Activated CD4-positive, alpha-beta memory T cell treated with anti-CD3 and anti-CD28 coated beads for 36 hours (primary cell): ENCODE measurements at regions of chr3 and their contacts with region 1.

Region 1: GRCh38 chr3:132722164-132723024 is at the start of gene NPHP3:
- DNase-seq: peak; percentile 98
- H3K4me3 Mint-ChIP-seq: peak within 1 kb of the TSS; percentile 84
- H3K27ac Mint-ChIP-seq: peak within 1 kb of the TSS; percentile 77
- H3K4me1 Mint-ChIP-seq: peaks cover 39% of the 10 kb centered on the region
- H3K27me3 Mint-ChIP-seq: no peaks in the 10 kb centered on the region
- total RNA-seq, gene NPHP3: 13.6 to 16.7 TPM

Region 2: GRCh38 chr3:132416807-132417694 is 305.3 kb before region 1 on chr3 and contains the start of gene DNAJC13:
- CTCF ChIA-PET with region 1: interaction called, 3 read pairs
- POLR2A ChIA-PET with region 1: no interaction called
- intact Hi-C with region 1: loop called (anchors 1 kb)
- DNase-seq: peak; percentile 94
- H3K4me3 Mint-ChIP-seq: peak within 1 kb of the TSS; percentile 98
- H3K27ac Mint-ChIP-seq: peak within 1 kb of the TSS; percentile 90
- H3K4me1 Mint-ChIP-seq: peaks cover 31% of the 10 kb centered on the region
- H3K27me3 Mint-ChIP-seq: no peaks in the 10 kb centered on the region
- total RNA-seq, gene DNAJC13: 33.5 to 34.5 TPM

Region 3: GRCh38 chr3:133256787-133257483 is 534.5 kb after region 1 on chr3:
- CTCF ChIA-PET with region 1: no interaction called
- POLR2A ChIA-PET with region 1: no interaction called
- intact Hi-C with region 1: loop called (anchors 10 kb)
- DNase-seq: no peak
- H3K4me3 Mint-ChIP-seq: no peak overlapping the region
- H3K27ac Mint-ChIP-seq: no peak overlapping the region
- H3K4me1 Mint-ChIP-seq: peaks cover 5% of the 10 kb centered on the region
- H3K27me3 Mint-ChIP-seq: peaks cover 1% of the 10 kb centered on the region

Region 4: DNA sequence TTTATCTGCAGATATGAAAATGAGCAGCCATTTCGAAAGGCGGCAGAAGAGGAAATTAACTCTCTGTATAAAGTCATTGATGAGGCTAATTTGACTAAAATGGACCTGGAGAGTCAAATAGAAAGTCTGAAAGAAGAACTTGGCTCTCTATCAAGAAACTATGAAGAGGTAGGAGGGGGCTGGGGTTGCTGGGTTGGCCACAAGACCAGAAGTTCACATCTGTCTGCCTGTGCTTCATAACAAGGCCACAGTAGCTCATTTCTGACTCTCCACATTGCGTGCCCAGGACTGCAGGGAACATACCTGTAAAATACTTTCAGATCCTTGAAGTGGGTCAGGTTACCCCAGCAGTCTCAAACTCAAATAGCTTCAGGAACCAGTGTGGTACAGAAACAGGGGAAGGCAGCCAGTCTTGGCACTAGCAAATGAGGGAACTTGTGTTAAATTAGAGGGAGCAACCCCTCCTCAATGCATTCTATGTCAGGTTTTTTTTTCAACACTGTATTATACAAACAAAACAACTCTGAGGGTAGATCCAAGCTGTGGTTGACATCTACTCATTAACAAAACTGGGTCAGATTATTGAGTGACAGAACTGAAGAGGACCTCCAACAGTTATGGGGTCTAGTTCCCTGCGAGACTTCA is 726.2 kb after region 1 on chr3:
- CTCF ChIA-PET with region 1: interaction called, 3 read pairs
- POLR2A ChIA-PET with region 1: no interaction called
- intact Hi-C with region 1: loop called (anchors 2 kb)
- DNase-seq: peak; percentile 86
- H3K4me3 Mint-ChIP-seq: no peak overlapping the region
- H3K27ac Mint-ChIP-seq: peak overlapping the region; percentile 76
- H3K4me1 Mint-ChIP-seq: peaks cover 39% of the 10 kb centered on the region
- H3K27me3 Mint-ChIP-seq: no peaks in the 10 kb centered on the region

Region 5: GRCh38 chr3:133805527-133806475 is 1083.4 kb after region 1 on chr3 and contains the start of gene SRPRB:
- CTCF ChIA-PET with region 1: no interaction called
- POLR2A ChIA-PET with region 1: no interaction called
- intact Hi-C with region 1: loop called (anchors 1 kb)
- DNase-seq: peak; percentile 98
- H3K4me3 Mint-ChIP-seq: peak within 1 kb of the TSS; percentile 98
- H3K27ac Mint-ChIP-seq: peak within 1 kb of the TSS; percentile 94
- H3K4me1 Mint-ChIP-seq: peaks cover 37% of the 10 kb centered on the region
- H3K27me3 Mint-ChIP-seq: peaks cover 5% of the 10 kb centered on the region
- total RNA-seq, gene SRPRB: 65.7 to 66.7 TPM